Right cardiac atrium (tissue), 5 donors: ENCODE measurements at regions of chr17 and their contacts with region 1.

Region 1: GRCh38 chr17:81142301-81143199 is 22.8 kb upstream of the PVALEF start:
- DNase-seq: peak; percentile 78 to 93 (median 91)
- ATAC-seq: peak; percentile 83 to 93
- H3K4me3 ChIP-seq: no peak overlapping the region
- H3K27ac ChIP-seq: no peak overlapping the region
- H3K4me1 ChIP-seq: no peaks in the 10 kb centered on the region
- H3K27me3 ChIP-seq: no peaks in the 10 kb centered on the region

Region 2: GRCh38 chr17:80761110-80761871 is 381.3 kb before region 1 on chr17:
- intact Hi-C with region 1: no loop called
- DNase-seq: no peak
- ATAC-seq: peak in 1 of 2 donors; percentile 66
- H3K4me3 ChIP-seq: no peak overlapping the region
- H3K27ac ChIP-seq: no peak overlapping the region
- H3K4me1 ChIP-seq: no peaks in the 10 kb centered on the region
- H3K27me3 ChIP-seq: no peaks in the 10 kb centered on the region

Region 3: DNA sequence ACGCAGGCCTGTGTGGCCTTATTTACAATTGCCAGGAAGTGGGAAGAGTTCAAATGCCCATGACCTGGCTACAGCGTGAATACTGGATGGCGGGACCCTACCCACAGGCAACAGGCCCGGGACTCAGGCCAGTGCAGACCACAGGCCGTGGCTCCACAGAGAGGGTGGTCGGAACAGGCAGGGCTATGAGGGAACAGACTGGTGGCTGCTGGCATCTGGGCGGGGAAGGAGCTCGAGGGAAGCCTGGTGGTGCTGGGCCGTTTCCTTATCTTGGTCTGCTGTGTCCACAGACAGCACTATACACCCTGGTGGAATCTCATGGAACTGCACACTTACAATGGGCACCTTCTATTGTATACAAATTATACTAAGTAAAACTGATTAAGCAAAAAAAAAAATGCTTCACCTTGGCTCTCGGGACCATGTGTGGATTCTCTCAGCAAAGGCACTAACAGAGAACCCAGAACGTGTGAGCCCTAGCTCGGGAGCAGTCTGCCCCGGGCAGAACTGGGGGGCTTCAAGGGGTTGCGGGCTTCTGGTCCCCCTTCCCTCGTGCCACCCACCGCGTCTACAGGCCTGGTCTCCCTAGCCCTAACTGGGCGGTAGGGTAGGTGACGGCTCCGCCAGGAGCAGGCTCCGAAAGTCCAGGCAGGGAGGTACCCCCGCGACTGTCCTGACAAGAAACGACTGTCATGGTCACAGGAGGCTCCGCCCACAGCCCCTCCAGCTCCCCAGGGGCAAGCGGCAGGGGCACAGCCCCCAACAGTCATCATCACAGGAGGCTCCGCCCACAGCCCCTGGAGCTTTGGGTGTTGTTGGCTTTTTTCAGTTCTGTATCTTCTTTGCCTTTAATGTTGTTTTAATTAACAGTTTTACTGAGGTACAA is 58.4 kb after region 1 on chr17:
- intact Hi-C with region 1: loop called in 2 of 4 experiments (anchors 2 to 5 kb)
- DNase-seq: peak in 1 of 3 donors; percentile 68
- ATAC-seq: peak; percentile 53 to 63
- H3K4me3 ChIP-seq: no peak overlapping the region
- H3K27ac ChIP-seq: no peak overlapping the region
- H3K4me1 ChIP-seq: no peaks in the 10 kb centered on the region
- H3K27me3 ChIP-seq: no peaks in the 10 kb centered on the region

Region 4: DNA sequence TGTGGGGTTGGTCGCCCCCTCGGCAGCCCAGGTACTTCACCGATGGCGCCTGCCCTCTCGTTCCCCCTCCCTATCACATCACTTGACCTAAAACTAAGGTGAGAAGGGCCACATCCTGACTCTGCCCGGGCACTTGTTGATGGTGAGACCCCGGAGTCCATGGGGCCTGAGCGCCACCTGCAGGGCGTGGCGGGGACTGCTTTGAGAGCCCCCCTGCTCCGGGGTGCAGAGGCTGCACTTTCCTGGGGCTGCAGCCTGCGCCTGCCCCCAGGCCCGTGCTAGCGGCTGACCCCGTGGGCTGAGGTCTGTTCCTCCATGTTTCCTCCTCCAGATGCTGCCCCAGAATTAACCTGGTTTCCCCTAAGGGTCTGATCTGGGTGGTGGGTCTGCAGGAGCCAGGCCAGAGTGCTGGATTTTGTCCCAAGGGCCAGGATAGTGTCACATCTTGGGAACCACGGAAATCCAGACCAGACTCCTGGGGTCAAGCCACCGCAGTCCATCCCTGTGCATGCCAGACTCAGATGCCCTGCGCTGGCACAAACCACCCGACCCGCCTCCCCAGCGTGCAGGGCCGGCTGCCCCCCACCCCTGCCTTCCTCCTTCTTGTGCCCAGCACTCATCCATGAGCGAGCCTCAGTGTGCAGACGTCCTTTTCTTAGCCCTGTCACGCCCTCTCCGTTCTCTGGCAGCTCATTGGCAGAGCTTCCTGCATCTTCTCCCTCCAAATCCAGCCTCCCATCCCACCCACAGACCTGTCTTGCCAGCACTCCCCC is 99.3 kb after region 1 on chr17:
- intact Hi-C with region 1: loop called (anchors 5 to 10 kb)
- DNase-seq: peak in 1 of 3 donors; percentile 74
- ATAC-seq: no peak
- H3K4me3 ChIP-seq: no peak overlapping the region
- H3K27ac ChIP-seq: no peak overlapping the region
- H3K4me1 ChIP-seq: peaks cover 8% of the 10 kb centered on the region
- H3K27me3 ChIP-seq: no peaks in the 10 kb centered on the region